Thyroid gland (tissue), 4 donors: ENCODE measurements at regions of chr3 and their contacts with region 1.

Region 1: DNA sequence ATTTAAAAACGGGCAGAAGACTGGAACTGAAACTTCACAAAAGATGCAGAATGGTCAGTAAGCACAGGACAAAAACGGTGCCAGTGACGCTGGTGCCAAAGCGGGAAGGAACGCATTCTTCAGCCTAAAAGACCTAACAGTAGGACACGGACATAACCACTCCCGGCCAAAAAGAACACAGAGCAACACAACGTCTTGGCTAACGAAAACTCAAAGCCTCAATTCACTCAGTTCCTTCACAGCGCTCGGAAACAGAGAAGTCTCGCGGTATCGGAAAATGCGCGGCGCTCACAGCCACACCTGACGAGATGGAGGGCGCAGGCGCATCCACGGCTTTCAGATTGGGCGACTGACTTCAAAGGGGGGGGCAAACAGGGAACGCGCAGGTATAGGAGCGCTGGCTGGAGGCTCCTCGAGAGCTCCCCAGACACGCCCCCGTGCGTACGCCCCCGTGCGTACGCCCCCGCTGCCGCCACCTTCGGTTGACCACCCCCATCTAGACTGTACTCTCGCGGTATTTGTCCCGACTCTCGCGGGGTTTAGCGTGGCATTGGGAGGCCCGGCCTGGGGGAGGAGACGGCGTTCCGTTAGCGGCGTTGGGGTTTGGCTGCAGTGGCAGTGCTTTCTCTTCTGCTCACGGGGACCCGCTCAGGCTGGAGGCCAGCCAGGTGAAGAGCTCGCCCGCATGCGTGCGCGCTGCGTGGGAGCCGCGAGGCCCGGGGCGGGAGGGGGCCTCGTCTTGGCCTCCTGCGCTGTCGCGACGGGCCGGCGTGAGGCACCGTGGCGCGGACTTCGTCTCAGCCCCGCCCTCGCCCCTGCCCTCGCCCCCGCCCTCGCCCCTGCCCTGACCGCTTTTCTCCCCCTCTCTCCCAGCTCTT is at the start of gene NKTR:
- DNase-seq: peak; percentile 99
- H3K4me3 ChIP-seq: peak within 1 kb of the TSS; percentile 63 to 75 (median 68)
- H3K27ac ChIP-seq: peak within 1 kb of the TSS; percentile 92 to 97 (median 94)
- H3K4me1 ChIP-seq: peaks cover 11 to 16% of the 10 kb centered on the region in 2 donors
- H3K27me3 ChIP-seq: no peaks in the 10 kb centered on the region
- CTCF ChIP-seq: no peak
- POLR2A ChIP-seq: peak; percentile 85 to 91
- total RNA-seq, gene NKTR: 157 to 383 (median 197) TPM

Region 2: GRCh38 chr3:42353632-42354031 is 246.7 kb before region 1 on chr3:
- intact Hi-C with region 1: no loop called
- DNase-seq: no peak
- H3K4me3 ChIP-seq: no peak overlapping the region
- H3K27ac ChIP-seq: no peak overlapping the region
- H3K4me1 ChIP-seq: no peaks in the 10 kb centered on the region
- H3K27me3 ChIP-seq: no peaks in the 10 kb centered on the region
- CTCF ChIP-seq: no peak
- POLR2A ChIP-seq: no peak

Region 3: DNA sequence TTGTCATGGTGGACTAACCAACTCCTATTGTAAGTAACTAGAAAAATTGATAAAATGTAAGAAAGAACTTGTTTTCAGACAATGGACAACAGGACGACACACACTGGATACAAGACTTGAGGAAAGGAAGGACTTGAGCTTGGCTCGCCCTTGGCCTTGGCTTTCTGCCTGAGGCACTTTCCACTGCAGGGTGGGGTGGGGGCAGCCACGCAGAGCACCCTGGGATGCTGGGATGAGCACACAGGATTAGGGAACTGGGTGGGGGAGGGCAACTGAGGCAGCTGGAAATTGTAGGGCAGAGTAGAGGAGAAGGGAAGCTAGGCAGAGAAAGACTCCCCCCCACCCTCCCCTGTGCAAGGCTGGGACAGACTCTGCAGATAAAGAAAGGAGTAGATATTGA is 127.7 kb after region 1 on chr3:
- intact Hi-C with region 1: no loop called
- DNase-seq: peak; percentile 49 to 51
- H3K4me3 ChIP-seq: no peak overlapping the region
- H3K27ac ChIP-seq: no peak overlapping the region
- H3K4me1 ChIP-seq: peaks cover 5 to 17% of the 10 kb centered on the region in 2 donors
- H3K27me3 ChIP-seq: no peaks in the 10 kb centered on the region
- CTCF ChIP-seq: no peak
- POLR2A ChIP-seq: no peak

Region 4: DNA sequence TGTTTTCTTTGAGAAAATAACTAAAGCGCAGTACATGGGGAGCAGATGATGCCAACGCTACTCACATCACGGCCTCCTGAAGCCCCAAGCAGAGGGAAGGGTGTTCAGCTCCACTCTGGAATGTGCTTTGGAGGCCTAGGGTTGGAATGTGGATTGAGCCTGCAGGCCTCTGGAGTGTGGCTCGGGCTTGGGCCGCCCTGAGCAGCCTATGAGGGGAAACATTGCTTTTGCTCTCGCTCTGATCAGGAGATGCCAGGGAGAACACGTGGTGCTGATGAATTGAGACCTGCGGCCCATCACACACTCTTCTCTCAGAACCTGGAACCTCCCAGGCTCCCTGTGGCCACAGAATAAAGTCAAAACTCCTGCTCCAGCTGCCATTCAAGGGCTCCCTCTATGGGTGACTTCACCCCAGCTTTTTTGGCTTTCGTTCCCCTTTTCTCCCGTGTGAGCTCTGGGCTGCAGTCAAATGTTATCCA is 149.4 kb after region 1 on chr3:
- intact Hi-C with region 1: loop called (anchors 10 kb)
- DNase-seq: peak; percentile 86 to 89
- H3K4me3 ChIP-seq: no peak overlapping the region
- H3K27ac ChIP-seq: peak overlapping the region; percentile 94 to 99 (median 98)
- H3K4me1 ChIP-seq: peaks cover 74 to 80% of the 10 kb centered on the region in 2 donors
- H3K27me3 ChIP-seq: no peaks in the 10 kb centered on the region
- CTCF ChIP-seq: peak in 4 of 6 experiments; percentile 38 to 50 (median 49)
- POLR2A ChIP-seq: peak in 1 of 2 donors; percentile 61